ENCODE measurements at regions of chr9 and their contacts with region 1.

Region 1: GRCh38 chr9:91775011-91775707 is 174.9 kb downstream of the ROR2 start:
- DNase-seq: peak; percentile 30 to 73 (median 43)
- ATAC-seq: peak; percentile 44
- H3K4me3 ChIP-seq: no peak overlapping the region
- H3K4me3 Mint-ChIP-seq: no peak overlapping the region
- H3K27ac ChIP-seq: no peak overlapping the region
- H3K27ac Mint-ChIP-seq: no peak overlapping the region
- H3K4me1 ChIP-seq: peaks cover 4% of the 10 kb centered on the region
- H3K4me1 Mint-ChIP-seq: no peaks in the 10 kb centered on the region
- H3K27me3 ChIP-seq: peaks cover 2 to 15% of the 10 kb centered on the region in 2 experiments
- H3K27me3 Mint-ChIP-seq: peaks cover 33% of the 10 kb centered on the region
- CTCF ChIP-seq: peak; percentile 69

Region 2: GRCh38 chr9:91949946-91950664 is 174.9 kb after region 1 on chr9 and contains the start of gene ROR2:
- CTCF ChIA-PET with region 1: no interaction called
- POLR2A ChIA-PET with region 1: no interaction called
- intact Hi-C with region 1: loop called in 1 of 2 experiments (anchors 10 kb)
- DNase-seq: peak in 8 of 14 experiments; percentile 5 to 63 (median 30)
- ATAC-seq: peak; percentile 51
- H3K4me3 ChIP-seq: peak within 1 kb of the TSS; percentile 48
- H3K4me3 Mint-ChIP-seq: no peak within 1 kb of the TSS
- H3K27ac ChIP-seq: no peak within 1 kb of the TSS
- H3K27ac Mint-ChIP-seq: no peak within 1 kb of the TSS
- H3K4me1 ChIP-seq: peaks cover 14% of the 10 kb centered on the region
- H3K4me1 Mint-ChIP-seq: no peaks in the 10 kb centered on the region
- H3K27me3 ChIP-seq: peaks cover 41 to 77% of the 10 kb centered on the region in 2 experiments
- H3K27me3 Mint-ChIP-seq: peaks cover 80% of the 10 kb centered on the region
- CTCF ChIP-seq: no peak
- total RNA-seq, gene ROR2: not detected

Measured in CD4-positive, alpha-beta T cell (primary cell).